ENCODE measurements at regions of chr22 and their contacts with region 1.

Region 1: DNA sequence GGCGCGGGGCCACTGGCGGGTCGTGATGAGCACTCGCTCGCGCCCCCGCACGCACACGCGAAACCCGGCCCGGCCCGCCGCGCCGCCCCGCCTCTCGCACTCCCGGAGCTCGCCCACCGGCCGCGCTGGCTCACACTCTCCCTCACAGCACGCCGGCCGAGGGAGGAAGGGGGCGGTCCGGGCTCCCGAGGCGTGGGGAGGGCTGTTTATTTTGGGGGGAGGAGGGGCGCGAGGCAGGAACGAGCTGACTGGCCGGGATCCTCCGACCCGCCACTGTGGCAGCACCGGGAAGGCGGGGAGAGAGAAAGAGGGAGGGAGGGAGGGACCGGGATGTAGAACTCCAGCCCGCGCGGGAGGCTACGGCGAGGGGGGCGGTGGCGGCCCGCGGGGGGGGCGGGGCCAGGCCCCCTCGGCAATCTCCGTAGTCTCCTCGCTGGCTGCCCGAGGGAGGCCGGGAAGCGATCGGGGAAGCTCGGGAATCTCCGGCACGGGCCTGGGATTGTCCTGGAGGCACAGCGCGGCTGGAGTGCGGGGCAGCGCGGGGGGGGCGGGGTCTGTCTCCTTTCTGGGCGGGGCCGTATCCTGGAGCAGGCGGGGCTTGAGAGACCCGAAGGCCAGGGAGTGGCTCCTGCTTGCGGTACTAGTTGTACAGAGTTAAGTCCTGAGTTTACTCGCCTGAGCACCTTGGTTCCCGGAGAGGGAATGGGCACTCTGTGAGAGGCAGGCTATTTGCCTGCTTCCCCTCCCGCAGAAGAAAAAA is at the start of gene RBFOX2:
- DNase-seq: peak; percentile 96 to 98
- H3K4me3 ChIP-seq: peak within 1 kb of the TSS; percentile 93
- H3K4me3 Mint-ChIP-seq: peak within 1 kb of the TSS; percentile 88
- H3K27ac Mint-ChIP-seq: peak within 1 kb of the TSS; percentile 81
- H3K4me1 ChIP-seq: peaks cover 11% of the 10 kb centered on the region; the same call in 1 of the 2 replicates
- H3K4me1 Mint-ChIP-seq: peaks cover 25% of the 10 kb centered on the region
- H3K27me3 ChIP-seq: no peaks in the 10 kb centered on the region
- H3K27me3 Mint-ChIP-seq: no peaks in the 10 kb centered on the region
- CTCF ChIP-seq: no peak
- total RNA-seq, gene RBFOX2: 91.1 and 96.5 TPM in 2 replicates

Region 2: DNA sequence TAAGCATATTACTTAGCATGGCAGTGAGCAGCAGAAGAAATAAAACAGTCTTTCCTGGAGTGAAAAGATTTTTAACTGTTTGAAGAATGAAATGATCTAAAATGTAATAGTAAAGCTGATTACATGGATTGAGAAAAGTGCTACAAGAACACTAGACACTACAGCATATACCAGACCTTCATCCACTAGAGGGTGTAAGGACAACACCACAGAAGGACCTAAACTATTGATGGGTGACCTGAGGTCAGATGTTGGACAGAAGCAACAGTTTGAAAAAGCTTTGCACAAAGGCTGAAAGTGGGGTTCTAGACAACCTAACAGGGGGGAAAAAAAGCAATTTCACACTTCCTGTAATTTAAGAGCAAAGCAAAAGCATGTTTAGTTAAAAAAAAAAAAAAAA is 97.9 kb before region 1 on chr22:
- CTCF ChIA-PET with region 1: no interaction called
- POLR2A ChIA-PET with region 1: no interaction called
- intact Hi-C with region 1: loop called (anchors 1 kb)
- DNase-seq: peak in 1 of 2 experiments; percentile 58
- H3K4me3 ChIP-seq: no peak overlapping the region
- H3K4me3 Mint-ChIP-seq: no peak overlapping the region
- H3K27ac Mint-ChIP-seq: peak overlapping the region; percentile 27
- H3K4me1 ChIP-seq: no peaks in the 10 kb centered on the region
- H3K4me1 Mint-ChIP-seq: peaks cover 6% of the 10 kb centered on the region
- H3K27me3 ChIP-seq: no peaks in the 10 kb centered on the region
- H3K27me3 Mint-ChIP-seq: no peaks in the 10 kb centered on the region
- CTCF ChIP-seq: peak; percentile 30 to 71

Region 3: GRCh38 chr22:35961480-35962295 is 67.1 kb before region 1 on chr22:
- CTCF ChIA-PET with region 1: no interaction called
- POLR2A ChIA-PET with region 1: no interaction called
- intact Hi-C with region 1: loop called (anchors 10 kb)
- DNase-seq: no peak
- H3K4me3 ChIP-seq: no peak overlapping the region
- H3K4me3 Mint-ChIP-seq: no peak overlapping the region
- H3K27ac Mint-ChIP-seq: peak overlapping the region; percentile 81
- H3K4me1 ChIP-seq: peaks cover 6% of the 10 kb centered on the region
- H3K4me1 Mint-ChIP-seq: peaks cover 23% of the 10 kb centered on the region
- H3K27me3 ChIP-seq: no peaks in the 10 kb centered on the region
- H3K27me3 Mint-ChIP-seq: no peaks in the 10 kb centered on the region
- CTCF ChIP-seq: no peak

Measured in Caco-2 (cell line).